Adrenal gland (tissue), 19 donors: ENCODE measurements at regions of chr18 and their contacts with region 1.

Region 1: DNA sequence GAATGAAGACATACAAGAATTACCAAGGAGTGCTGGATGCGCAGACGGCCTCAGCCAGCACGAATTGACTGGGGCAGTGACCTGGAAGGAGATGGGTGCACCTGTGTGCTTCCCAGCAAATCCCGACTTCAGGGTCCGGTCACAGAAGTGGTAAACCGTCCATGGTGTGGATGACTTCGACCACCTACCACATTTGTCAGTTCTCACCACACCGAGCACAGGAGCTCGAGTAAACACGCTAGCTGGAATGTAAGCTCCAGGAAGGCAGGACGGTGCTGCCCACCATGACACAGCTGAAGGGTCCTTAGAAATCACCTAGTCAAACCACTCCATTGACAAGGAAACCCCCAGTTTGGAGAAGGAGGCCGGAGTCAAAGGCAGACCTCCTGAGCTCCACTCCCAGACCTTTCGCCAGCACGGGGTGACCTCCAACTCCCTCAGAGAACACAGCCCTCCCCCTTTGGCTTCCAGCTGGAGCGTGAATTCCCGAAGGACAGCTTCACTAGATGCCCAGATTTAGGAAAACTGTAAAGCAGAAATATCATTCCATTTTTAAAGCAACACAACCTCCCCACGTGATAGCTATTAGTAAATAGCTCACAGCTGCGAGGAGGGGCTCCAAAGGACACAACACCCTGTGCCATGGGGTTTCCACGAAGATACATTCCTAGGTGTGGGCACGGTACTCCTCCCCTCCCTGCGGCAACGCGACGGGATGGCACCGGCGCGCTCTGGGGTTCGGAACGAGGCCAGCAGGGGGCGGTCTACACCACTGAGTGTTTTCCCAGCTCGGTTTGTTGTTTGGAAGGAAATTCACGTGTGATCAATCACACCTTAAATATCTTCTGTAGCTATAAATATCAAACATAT is 34.1 kb upstream of the GNAL start:
- DNase-seq: peak in 6 of 7 donors; percentile 46 to 69 (median 52)
- H3K4me3 ChIP-seq: no peak overlapping the region
- H3K27ac ChIP-seq: no peak overlapping the region
- H3K4me1 ChIP-seq: no peaks in the 10 kb centered on the region
- H3K27me3 ChIP-seq: peaks cover 6% of the 10 kb centered on the region
- CTCF ChIP-seq: peak; percentile 57 to 76 (median 66)
- POLR2A ChIP-seq: no peak

Region 2: GRCh38 chr18:11482271-11482670 is 172.7 kb before region 1 on chr18:
- intact Hi-C with region 1: no loop called
- DNase-seq: no peak
- H3K4me3 ChIP-seq: no peak overlapping the region
- H3K27ac ChIP-seq: no peak overlapping the region
- H3K4me1 ChIP-seq: no peaks in the 10 kb centered on the region
- H3K27me3 ChIP-seq: no peaks in the 10 kb centered on the region
- CTCF ChIP-seq: no peak
- POLR2A ChIP-seq: no peak

Region 3: GRCh38 chr18:11733031-11733430 is 78.1 kb after region 1 on chr18:
- intact Hi-C with region 1: no loop called
- DNase-seq: peak; percentile 58 to 86 (median 76)
- H3K4me3 ChIP-seq: peak overlapping the region in 1 of 4 donors; percentile 23
- H3K27ac ChIP-seq: no peak overlapping the region
- H3K4me1 ChIP-seq: no peaks in the 10 kb centered on the region
- H3K27me3 ChIP-seq: peaks cover 15% of the 10 kb centered on the region
- CTCF ChIP-seq: peak; percentile 71 to 97 (median 85)
- POLR2A ChIP-seq: no peak

Region 4: DNA sequence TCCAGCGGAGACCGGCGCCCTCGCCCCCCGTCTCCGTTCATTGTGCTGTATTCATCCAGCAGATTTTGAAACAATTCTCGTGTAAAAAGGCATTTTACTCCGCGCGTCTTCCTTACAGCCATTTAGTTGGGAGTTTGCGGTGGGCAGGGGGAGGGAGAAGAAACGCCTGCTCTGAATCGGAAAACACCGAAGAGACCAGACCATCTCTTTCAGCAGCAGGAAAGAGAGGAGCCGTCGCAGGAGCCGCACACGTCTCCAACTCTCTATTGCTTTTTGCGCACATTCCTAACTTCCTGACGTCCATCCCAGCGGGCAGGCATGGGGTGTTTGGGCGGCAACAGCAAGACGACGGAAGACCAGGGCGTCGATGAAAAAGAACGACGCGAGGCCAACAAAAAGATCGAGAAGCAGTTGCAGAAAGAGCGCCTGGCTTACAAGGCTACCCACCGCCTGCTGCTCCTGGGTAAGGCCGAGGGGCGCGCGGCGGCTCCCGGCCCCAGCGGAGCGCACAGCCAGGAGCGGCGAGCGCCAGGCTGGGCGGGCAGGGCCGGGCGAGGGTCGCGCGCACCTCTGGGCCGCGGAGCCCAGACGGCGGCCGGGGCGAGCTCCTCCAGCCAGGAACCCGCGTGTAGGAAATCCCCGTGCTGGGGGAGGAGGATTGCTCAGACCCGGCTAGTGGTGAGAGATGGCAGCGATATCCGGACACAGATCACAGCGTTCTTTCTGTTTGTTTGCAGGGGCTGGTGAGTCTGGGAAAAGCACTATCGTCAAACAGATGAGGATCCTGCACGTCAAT is 97.3 kb after region 1 on chr18:
- intact Hi-C with region 1: no loop called
- DNase-seq: peak in 2 of 7 donors; percentile 14 to 24
- H3K4me3 ChIP-seq: peak overlapping the region in 1 of 4 donors; percentile 56
- H3K27ac ChIP-seq: no peak overlapping the region
- H3K4me1 ChIP-seq: peaks cover 0 to 6% of the 10 kb centered on the region in 2 donors
- H3K27me3 ChIP-seq: peaks cover 35% of the 10 kb centered on the region
- CTCF ChIP-seq: no peak
- POLR2A ChIP-seq: no peak

Region 5: GRCh38 chr18:11883153-11883552 is 228.2 kb after region 1 on chr18:
- intact Hi-C with region 1: loop called in 1 of 2 experiments (anchors 10 kb)
- DNase-seq: no peak
- H3K4me3 ChIP-seq: no peak overlapping the region
- H3K27ac ChIP-seq: no peak overlapping the region
- H3K4me1 ChIP-seq: no peaks in the 10 kb centered on the region
- H3K27me3 ChIP-seq: no peaks in the 10 kb centered on the region
- CTCF ChIP-seq: no peak
- POLR2A ChIP-seq: no peak

Region 6: GRCh38 chr18:12049978-12050811 is 395.2 kb after region 1 on chr18:
- intact Hi-C with region 1: loop called in 1 of 2 experiments (anchors 10 kb)
- DNase-seq: peak in 2 of 7 donors; percentile 10 to 43
- H3K4me3 ChIP-seq: no peak overlapping the region
- H3K27ac ChIP-seq: no peak overlapping the region
- H3K4me1 ChIP-seq: no peaks in the 10 kb centered on the region
- H3K27me3 ChIP-seq: no peaks in the 10 kb centered on the region
- CTCF ChIP-seq: no peak
- POLR2A ChIP-seq: no peak